Astrocyte of the cerebellum (primary cell): ENCODE measurements at regions of chr11 and their contacts with region 1.

Region 1: DNA sequence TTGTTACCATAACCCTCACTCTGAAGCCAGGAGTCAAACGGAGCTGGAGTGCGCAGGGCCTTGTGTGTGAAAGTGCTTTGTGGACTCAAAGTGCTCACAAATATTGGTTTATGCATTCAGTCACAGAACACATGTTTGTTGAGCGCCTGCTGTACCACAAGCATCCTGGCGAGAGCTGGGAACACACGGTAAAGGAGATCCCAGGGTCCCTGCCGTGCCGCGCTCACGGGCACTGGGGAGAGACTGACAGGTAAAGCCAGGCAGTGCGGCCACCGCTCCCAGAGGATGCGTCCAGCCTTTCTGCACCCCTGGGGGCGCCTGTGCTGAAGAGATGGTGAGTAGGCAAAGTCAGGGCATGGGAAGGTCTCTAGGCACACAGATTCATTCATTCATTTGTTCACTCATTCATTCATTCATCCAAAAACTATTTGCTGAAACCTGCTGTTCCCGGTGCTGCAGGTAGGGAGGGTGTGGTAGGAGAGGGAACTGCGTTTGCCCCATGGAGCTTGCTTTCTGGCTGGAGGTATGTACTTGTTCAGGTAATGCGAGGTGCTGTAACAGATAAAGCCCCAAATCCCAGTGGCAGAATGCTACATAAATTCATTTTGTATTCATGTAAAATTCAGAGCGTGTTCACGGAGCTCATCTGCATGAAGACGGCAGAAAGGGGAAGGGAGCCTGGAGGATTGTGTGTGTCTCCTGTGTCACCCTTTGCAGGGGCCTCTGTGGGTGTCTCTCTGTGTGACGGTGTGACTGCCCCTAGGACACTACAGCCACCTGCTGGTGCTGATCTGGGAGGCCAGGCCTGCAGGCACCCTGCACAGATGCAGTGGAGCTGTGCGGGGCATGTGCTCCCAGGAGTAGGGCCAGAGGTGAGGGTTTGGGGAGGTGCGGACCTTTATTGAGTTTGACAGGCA is 167.0 kb upstream of the B3GAT1 start:
- DNase-seq: no peak
- H3K4me3 ChIP-seq: no peak overlapping the region
- CTCF ChIP-seq: no peak

Region 2: DNA sequence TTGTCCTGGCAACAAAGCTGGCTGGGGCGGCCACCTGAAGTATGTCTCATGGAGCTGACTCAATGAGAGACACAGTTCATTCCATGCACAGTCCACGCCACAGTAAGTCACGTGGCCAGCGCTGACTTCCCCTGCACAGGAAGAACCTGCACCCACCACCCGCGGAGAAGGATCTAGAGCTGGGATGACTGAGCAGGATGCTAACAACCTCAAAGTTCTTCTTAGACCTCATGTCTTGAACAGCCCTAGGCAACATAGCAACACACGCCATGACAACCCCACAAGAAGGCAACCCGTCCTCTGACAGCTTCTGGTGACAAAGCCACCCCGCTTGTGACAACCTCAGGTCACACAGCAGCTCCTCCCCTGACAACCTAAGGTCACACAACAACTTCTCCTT is 90.2 kb before region 1 on chr11:
- in situ Hi-C with region 1: no loop called
- DNase-seq: no peak
- H3K4me3 ChIP-seq: no peak overlapping the region
- CTCF ChIP-seq: no peak

Region 3: DNA sequence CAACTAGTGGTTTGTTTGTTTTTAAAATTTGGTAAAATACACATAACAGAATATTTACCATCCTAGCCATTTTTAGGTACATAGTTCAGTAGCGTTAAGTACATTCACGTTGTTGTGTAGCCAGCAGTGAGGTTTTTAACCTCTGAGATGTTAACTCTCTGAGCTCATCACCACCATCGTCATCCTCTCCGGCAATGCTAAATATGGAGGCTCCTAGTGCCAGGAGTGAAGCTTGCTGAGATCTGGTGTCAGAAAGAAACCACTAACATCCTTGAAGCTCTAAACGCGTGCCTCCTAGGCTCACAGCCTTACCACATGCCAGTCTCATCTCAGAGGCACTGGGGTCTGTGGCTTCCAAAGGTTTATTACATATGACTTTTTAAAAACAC is 163.2 kb after region 1 on chr11:
- in situ Hi-C with region 1: loop called (anchors 10 kb)
- DNase-seq: no peak
- H3K4me3 ChIP-seq: no peak overlapping the region
- CTCF ChIP-seq: no peak